ENCODE measurements at regions of chrX and their contacts with region 1.

Region 1: GRCh38 chrX:10119399-10119990 is 37.3 kb upstream of the CLCN4 start:
- DNase-seq: peak in 7 of 10 donors; percentile 21 to 91 (median 49)

Region 2: GRCh38 chrX:9662148-9662547 is 457.3 kb before region 1 on chrX:
- intact Hi-C with region 1: no loop called
- DNase-seq: no peak

Region 3: GRCh38 chrX:9873952-9874351 is 245.5 kb before region 1 on chrX:
- intact Hi-C with region 1: loop called (anchors 10 kb)
- DNase-seq: peak in 6 of 10 donors; percentile 38 to 91 (median 48)

Region 4: DNA sequence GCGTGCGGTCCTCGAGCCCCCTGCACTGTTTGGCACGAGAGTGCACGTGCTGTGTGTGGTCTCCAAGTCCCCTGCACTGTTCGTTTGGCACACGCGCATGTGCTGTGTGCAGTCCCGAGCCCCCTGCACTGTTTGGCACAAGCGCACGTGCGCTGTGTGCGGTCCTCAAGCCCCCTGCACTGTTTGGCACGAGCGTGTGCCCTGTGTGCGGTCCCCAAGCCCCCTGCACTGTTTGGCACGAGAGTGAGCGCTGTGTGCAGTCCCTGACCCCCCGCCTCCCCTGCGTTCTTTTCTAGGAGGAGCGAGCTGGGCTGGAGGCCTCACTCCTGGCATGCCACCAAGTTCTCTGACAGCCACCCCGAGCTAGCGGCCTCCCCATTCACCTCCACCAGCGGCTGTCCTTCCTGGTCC is 228.8 kb before region 1 on chrX:
- intact Hi-C with region 1: loop called (anchors 2 kb)
- DNase-seq: no peak

Region 5: GRCh38 chrX:9995855-9996339 is 123.6 kb before region 1 on chrX:
- intact Hi-C with region 1: loop called (anchors 1 kb)
- DNase-seq: peak; percentile 68 to 97 (median 85)